GM12878 (cell line): ENCODE measurements at regions of chr9 and their contacts with region 1.

Region 1: DNA sequence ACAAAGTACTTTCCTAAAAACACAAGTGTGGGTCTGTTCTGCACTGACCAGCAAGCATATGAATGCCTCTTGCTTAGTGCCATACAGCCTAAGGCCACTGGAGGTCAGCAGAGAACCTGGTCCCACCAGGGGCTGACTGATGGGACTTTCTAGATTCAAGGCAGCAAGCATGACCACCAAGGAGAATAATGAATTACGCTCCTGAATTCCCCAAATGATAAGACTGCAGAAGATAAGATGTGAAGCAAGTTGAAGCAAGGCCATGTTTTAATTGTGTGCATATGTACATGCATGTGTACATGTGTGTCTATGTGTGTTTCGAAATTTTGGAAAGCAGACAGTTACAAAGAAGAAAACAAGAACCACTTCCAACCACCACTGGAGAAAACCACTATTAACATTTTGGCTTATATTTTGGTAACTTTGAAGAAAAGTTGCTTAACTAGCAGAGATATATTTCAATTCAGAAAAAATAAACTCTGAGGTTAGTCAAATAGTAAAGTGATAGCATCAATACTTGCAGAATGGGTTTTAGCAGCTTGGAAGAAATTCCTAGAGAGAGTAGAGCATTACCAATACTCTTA is 70.5 kb downstream of the ERP44 start:
- DNase-seq: peak; percentile 66
- ATAC-seq: peak; percentile 96
- H3K4me3 ChIP-seq: no peak overlapping the region
- H3K27ac ChIP-seq: peak overlapping the region; percentile 58; the same call in 1 of the 2 replicates
- H3K4me1 ChIP-seq: peaks cover 28% of the 10 kb centered on the region
- H3K27me3 ChIP-seq: no peaks in the 10 kb centered on the region
- CTCF ChIP-seq: peak; percentile 96 to 98 (median 98)
- EP300 ChIP-seq: no peak
- POLR2A ChIP-seq: no peak
- RAD21 ChIP-seq: peak; percentile 100

Region 2: GRCh38 chr9:100058699-100059579 is 30.6 kb after region 1 on chr9:
- CTCF ChIA-PET with region 1: interaction called, 4 read pairs
- POLR2A ChIA-PET with region 1: interaction called, 3 read pairs
- RAD21 ChIA-PET with region 1: interaction called, 6 read pairs
- SMC1A ChIA-PET with region 1: interaction called, 12 read pairs
- in situ Hi-C with region 1: no loop called
- intact Hi-C with region 1: no loop called
- DNase-seq: peak; percentile 78
- ATAC-seq: peak; percentile 91
- H3K4me3 ChIP-seq: peak overlapping the region; percentile 34; the same call in 1 of the 2 replicates
- H3K27ac ChIP-seq: peak overlapping the region; percentile 57
- H3K4me1 ChIP-seq: peaks cover 29% of the 10 kb centered on the region
- H3K27me3 ChIP-seq: no peaks in the 10 kb centered on the region
- CTCF ChIP-seq: no peak
- EP300 ChIP-seq: peak; percentile 85 to 92
- POLR2A ChIP-seq: no peak
- RAD21 ChIP-seq: 0 out of 2 replicates have a peak, but pooled peaks have one; percentile 11

Region 3: GRCh38 chr9:100098887-100099721 is 70.8 kb after region 1 on chr9 and contains the starts of genes ERP44 and INVS:
- CTCF ChIA-PET with region 1: interaction called, 4 read pairs
- POLR2A ChIA-PET with region 1: interaction called, 5 read pairs
- RAD21 ChIA-PET with region 1: interaction called, 5 read pairs
- SMC1A ChIA-PET with region 1: interaction called, 14 read pairs
- in situ Hi-C with region 1: no loop called
- intact Hi-C with region 1: loop called (anchors 5 kb)
- DNase-seq: peak; percentile 97
- ATAC-seq: peak; percentile 98
- H3K4me3 ChIP-seq: peak within 1 kb of the TSS; percentile 99
- H3K27ac ChIP-seq: peak within 1 kb of the TSS; percentile 92
- H3K4me1 ChIP-seq: no peaks in the 10 kb centered on the region
- H3K27me3 ChIP-seq: no peaks in the 10 kb centered on the region
- CTCF ChIP-seq: no peak
- EP300 ChIP-seq: no peak
- POLR2A ChIP-seq: peak; percentile 96
- RAD21 ChIP-seq: 0 out of 2 replicates have a peak, but pooled peaks have one; percentile 1
- polyA plus RNA-seq, gene ERP44: 13.5 to 14.4 TPM
- polyA plus RNA-seq, gene INVS: 0.93 to 1.0 TPM

Region 4: GRCh38 chr9:100216178-100216787 is 188.0 kb after region 1 on chr9:
- CTCF ChIA-PET with region 1: interaction called, 143 read pairs
- POLR2A ChIA-PET with region 1: interaction called, 4 read pairs
- RAD21 ChIA-PET with region 1: interaction called, 15 read pairs
- SMC1A ChIA-PET with region 1: interaction called, 115 read pairs
- in situ Hi-C with region 1: loop called (anchors 5 kb)
- intact Hi-C with region 1: loop called (anchors 1 kb)
- DNase-seq: peak; percentile 40
- ATAC-seq: peak; percentile 96
- H3K4me3 ChIP-seq: no peak overlapping the region
- H3K27ac ChIP-seq: no peak overlapping the region
- H3K4me1 ChIP-seq: peaks cover 17% of the 10 kb centered on the region
- H3K27me3 ChIP-seq: no peaks in the 10 kb centered on the region
- CTCF ChIP-seq: peak; percentile 75 to 79 (median 77)
- EP300 ChIP-seq: no peak
- POLR2A ChIP-seq: no peak
- RAD21 ChIP-seq: peak; percentile 88

Region 5: DNA sequence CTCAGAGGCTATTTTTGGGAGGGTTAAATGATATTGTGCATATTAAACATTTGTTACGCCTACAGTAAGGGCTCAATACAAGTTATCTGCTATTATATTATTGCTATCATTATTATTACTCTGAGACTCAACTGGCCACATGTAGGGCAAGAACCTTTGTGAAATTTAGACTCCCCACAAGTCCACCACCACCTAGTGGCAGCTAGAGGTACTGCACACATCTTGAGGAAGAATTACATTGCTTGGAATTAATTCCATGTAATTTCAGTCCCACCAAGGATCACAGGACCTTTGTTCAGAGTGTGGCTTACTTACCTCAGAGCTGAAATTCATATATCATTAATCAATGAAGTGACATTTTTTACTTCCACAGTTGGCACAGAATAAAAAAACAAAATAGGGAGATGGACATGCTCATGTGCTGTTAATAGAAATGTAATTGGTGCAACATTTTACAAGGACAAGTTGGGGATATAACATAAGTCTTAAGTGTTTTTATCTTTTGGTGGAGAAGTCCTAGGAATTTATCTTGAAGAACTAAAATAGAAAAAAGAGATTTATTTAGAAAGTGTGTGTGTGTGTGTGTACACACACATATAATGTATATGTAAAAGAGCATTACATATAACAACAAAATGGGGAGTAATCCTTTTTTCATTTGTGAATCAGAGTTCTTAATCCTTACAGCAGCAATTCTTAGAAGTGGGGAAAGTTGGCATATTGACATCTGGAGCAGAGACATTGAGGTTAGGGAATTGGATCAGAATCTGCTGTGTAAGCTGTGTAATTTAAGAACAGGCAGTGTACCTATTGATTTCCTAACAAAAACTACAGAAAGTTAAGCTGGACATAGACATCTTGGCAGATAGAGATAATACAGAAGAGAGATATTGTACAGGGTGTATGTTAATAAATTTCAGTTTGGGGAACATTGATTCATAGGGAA is 409.8 kb after region 1 on chr9:
- CTCF ChIA-PET with region 1: no interaction called
- POLR2A ChIA-PET with region 1: no interaction called
- RAD21 ChIA-PET with region 1: no interaction called
- SMC1A ChIA-PET with region 1: no interaction called
- in situ Hi-C with region 1: no loop called
- intact Hi-C with region 1: loop called (anchors 5 kb)
- DNase-seq: no peak
- ATAC-seq: peak; percentile 83
- H3K4me3 ChIP-seq: no peak overlapping the region
- H3K27ac ChIP-seq: no peak overlapping the region
- H3K4me1 ChIP-seq: no peaks in the 10 kb centered on the region
- H3K27me3 ChIP-seq: no peaks in the 10 kb centered on the region
- CTCF ChIP-seq: peak; percentile 88 to 92 (median 91)
- EP300 ChIP-seq: no peak
- POLR2A ChIP-seq: no peak
- RAD21 ChIP-seq: peak; percentile 61

Region 6: DNA sequence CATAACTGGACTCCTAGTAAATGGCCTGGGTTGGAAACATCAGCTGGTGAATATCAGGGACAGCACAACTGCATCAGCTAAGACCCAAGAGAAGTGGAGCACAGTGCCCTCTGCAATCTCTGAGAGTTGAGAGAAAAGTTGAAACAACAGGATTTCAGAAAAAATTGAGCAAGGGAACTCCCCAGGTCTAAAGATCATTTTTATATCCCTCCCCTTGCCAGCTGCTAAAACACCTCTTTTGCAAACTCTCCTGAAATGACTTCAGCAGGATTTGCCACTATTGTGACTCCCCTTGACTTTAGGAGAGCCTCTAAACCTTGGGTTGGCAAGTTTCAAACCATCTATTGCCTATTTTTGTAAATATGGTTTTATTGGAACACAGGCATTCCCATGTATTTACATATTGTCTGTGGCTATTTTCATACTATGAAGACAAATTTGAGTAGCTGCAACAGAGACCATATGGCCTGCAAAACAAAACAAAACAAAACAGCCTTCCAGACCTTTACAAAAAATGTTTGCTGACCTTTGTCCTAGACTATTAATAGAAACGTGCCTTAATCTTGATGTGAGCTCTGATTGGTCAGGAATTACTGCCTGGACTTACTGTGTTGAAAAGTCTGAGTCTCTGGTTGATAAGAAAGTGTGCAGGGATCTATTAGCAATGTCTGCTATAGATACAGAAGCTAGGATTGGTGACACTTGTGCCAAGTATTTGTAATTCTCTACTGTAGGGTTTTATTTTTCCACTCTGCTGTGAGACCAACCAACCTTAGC is 962.5 kb after region 1 on chr9:
- CTCF ChIA-PET with region 1: no interaction called
- POLR2A ChIA-PET with region 1: no interaction called
- RAD21 ChIA-PET with region 1: no interaction called
- SMC1A ChIA-PET with region 1: no interaction called
- in situ Hi-C with region 1: no loop called
- intact Hi-C with region 1: no loop called
- DNase-seq: no peak
- ATAC-seq: no peak
- H3K4me3 ChIP-seq: no peak overlapping the region
- H3K27ac ChIP-seq: no peak overlapping the region
- H3K4me1 ChIP-seq: no peaks in the 10 kb centered on the region
- H3K27me3 ChIP-seq: no peaks in the 10 kb centered on the region
- CTCF ChIP-seq: no peak
- EP300 ChIP-seq: no peak
- POLR2A ChIP-seq: no peak
- RAD21 ChIP-seq: no peak